PC-3 (cell line): ENCODE measurements at regions of chr1 and their contacts with region 1.

Region 1: DNA sequence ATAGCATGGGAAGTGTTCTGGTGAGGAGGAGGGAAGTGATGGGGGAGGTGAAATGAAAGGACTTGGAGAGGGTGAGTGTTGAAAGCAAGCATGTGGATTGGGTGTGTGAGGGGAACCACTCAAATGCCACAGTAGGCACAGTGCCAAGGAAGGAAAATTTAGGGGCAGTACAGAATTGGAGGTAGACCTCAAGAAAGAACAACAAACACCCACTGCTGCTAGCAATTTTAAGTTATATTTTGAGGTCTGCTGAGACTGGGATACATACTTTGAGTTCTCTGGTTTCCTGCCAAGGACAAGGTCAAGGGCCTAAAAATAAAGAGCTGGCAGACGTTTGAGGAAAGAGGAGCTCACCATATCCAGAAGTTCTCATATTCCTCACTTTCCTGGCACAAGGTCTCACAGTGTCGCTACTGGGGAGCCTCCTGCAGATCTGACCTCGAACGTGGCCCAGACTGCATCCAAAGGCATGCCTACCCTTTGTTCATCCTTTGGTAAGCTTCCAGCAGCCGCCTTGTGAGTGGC is 104.0 kb downstream of the BRINP2 start:
- DNase-seq: peak; percentile 74
- ATAC-seq: peak; percentile 37
- H3K4me3 ChIP-seq: no peak overlapping the region
- H3K27ac ChIP-seq: peak overlapping the region; percentile 73
- H3K4me1 ChIP-seq: peaks cover 55% of the 10 kb centered on the region
- H3K27me3 ChIP-seq: no peaks in the 10 kb centered on the region
- CTCF ChIP-seq: no peak

Region 2: GRCh38 chr1:177315270-177315669 is 40.5 kb after region 1 on chr1:
- CTCF ChIA-PET with region 1: no interaction called
- POLR2A ChIA-PET with region 1: no interaction called
- intact Hi-C with region 1: loop called (anchors 5 kb)
- DNase-seq: peak; percentile 60
- ATAC-seq: peak; percentile 89
- H3K4me3 ChIP-seq: no peak overlapping the region
- H3K27ac ChIP-seq: peak overlapping the region; percentile 70
- H3K4me1 ChIP-seq: peaks cover 35% of the 10 kb centered on the region
- H3K27me3 ChIP-seq: no peaks in the 10 kb centered on the region
- CTCF ChIP-seq: no peak

Region 3: GRCh38 chr1:177385760-177386698 is 111.3 kb after region 1 on chr1:
- CTCF ChIA-PET with region 1: no interaction called
- POLR2A ChIA-PET with region 1: interaction called, 10 read pairs
- intact Hi-C with region 1: no loop called
- DNase-seq: peak; percentile 70
- ATAC-seq: peak; percentile 79
- H3K4me3 ChIP-seq: no peak overlapping the region
- H3K27ac ChIP-seq: peak overlapping the region; percentile 65
- H3K4me1 ChIP-seq: peaks cover 27% of the 10 kb centered on the region
- H3K27me3 ChIP-seq: no peaks in the 10 kb centered on the region
- CTCF ChIP-seq: no peak